SK-N-SH (cell line): ENCODE measurements at regions of chr10 and their contacts with region 1.

Region 1: GRCh38 chr10:126387023-126387921 is 1.0 kb downstream of the ADAM12 start:
- DNase-seq: peak; percentile 80
- H3K4me3 ChIP-seq: peak overlapping the region; percentile 60 to 71
- H3K27ac ChIP-seq: peak overlapping the region; percentile 54 to 76
- H3K4me1 ChIP-seq: peaks cover 0 to 10% of the 10 kb centered on the region in 2 experiments; a peak in 2 of 4 replicates
- H3K27me3 ChIP-seq: no peaks in the 10 kb centered on the region
- CTCF ChIP-seq: peak; percentile 96
- EP300 ChIP-seq: peak in 1 of 2 experiments; percentile 38; a peak in 1 of 4 replicates
- RAD21 ChIP-seq: peak; percentile 88

Region 2: DNA sequence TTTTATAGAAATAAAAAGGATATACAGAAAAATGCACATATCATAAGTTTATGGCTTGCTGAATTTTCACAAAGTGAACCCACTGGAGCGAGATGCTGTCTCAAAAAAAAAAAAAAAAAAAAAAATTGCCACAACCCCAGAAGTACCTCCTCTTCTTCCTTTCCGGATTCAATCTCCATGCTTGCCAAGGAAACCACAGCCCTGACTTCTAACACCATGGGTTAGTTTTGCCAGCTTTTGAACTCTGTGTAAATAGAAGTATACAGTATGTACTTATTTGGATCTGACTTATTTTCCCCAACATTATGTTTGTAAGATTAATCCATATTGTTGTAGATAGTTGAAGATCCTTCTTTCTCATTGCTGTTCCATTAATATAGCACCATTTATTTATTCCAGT is 450.9 kb before region 1 on chr10:
- CTCF ChIA-PET with region 1: interaction called, 14 read pairs
- POLR2A ChIA-PET with region 1: no interaction called
- DNase-seq: no peak
- H3K4me3 ChIP-seq: no peak overlapping the region
- H3K27ac ChIP-seq: no peak overlapping the region
- H3K4me1 ChIP-seq: peaks cover 0 to 7% of the 10 kb centered on the region in 2 experiments; a peak in 1 of 4 replicates
- H3K27me3 ChIP-seq: no peaks in the 10 kb centered on the region
- CTCF ChIP-seq: no peak
- EP300 ChIP-seq: no peak
- RAD21 ChIP-seq: no peak

Region 3: DNA sequence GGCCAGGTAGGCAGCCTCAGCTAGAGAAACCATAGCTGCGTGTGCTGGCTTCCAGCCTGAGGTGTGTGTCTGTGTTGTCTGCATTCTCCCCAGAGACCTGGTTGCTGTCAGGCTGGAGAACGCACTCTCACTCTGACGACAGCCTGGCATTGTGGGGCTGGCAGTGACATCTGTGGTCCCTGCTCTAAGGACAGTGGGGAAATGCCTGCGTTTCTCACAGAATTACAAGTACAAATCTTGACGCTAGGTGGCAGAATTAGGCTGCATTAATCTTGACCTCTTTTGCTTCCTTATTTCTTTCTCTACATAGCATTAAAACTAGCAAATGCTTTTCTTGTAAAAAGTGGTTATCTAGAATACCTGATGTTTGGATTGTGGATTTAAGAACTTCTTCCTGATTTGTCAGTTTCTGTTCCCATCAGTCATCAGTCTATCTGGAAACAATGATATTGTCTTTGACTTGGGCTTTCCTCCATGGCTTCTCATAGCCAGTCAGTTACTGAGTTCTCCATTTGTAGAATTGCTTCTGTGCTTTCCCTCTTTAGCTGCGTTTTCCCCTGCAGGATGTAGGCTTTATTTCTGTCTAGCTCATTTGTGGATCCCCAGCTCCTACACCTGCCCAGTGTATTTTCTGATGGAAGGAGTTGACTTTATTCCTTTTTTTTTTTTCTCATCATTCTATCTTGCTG is 404.9 kb before region 1 on chr10:
- CTCF ChIA-PET with region 1: interaction called, 24 read pairs
- POLR2A ChIA-PET with region 1: no interaction called
- DNase-seq: peak; percentile 78
- H3K4me3 ChIP-seq: no peak overlapping the region
- H3K27ac ChIP-seq: no peak overlapping the region; a peak in 1 of 4 replicates
- H3K4me1 ChIP-seq: peaks cover 0 to 7% of the 10 kb centered on the region in 2 experiments; a peak in 3 of 4 replicates
- H3K27me3 ChIP-seq: no peaks in the 10 kb centered on the region
- CTCF ChIP-seq: peak; percentile 71
- EP300 ChIP-seq: peak in 1 of 2 experiments; percentile 48; a peak in 1 of 4 replicates
- RAD21 ChIP-seq: peak; percentile 90

Region 4: GRCh38 chr10:126242397-126243287 is 144.6 kb before region 1 on chr10:
- CTCF ChIA-PET with region 1: interaction called, 10 read pairs
- POLR2A ChIA-PET with region 1: no interaction called
- DNase-seq: peak; percentile 80
- H3K4me3 ChIP-seq: no peak overlapping the region
- H3K27ac ChIP-seq: peak overlapping the region; percentile 89 to 98
- H3K4me1 ChIP-seq: peaks cover 26 to 30% of the 10 kb centered on the region in 2 experiments
- H3K27me3 ChIP-seq: no peaks in the 10 kb centered on the region
- CTCF ChIP-seq: no peak
- EP300 ChIP-seq: no peak
- RAD21 ChIP-seq: no peak

Region 5: DNA sequence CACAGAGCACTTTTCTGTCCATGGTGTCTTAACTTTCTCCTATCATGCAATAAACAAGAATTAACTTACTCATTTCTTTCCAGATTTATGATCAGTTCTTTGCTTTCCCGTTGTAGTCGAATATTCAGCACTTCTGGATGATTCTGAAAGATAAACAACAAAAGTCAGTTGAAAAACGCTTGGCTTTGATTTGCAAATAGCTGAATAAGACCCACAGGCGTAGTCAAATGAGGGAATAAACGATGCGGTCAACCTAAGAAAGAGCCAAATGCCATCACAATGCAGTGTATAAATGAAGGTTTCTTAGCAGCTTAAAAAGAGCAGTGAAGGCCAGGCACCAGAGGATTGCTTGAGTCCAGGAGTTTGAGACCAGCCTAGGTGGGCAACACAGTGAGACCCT is 108.4 kb before region 1 on chr10:
- CTCF ChIA-PET with region 1: no interaction called
- POLR2A ChIA-PET with region 1: no interaction called
- DNase-seq: no peak
- H3K4me3 ChIP-seq: no peak overlapping the region
- H3K27ac ChIP-seq: no peak overlapping the region
- H3K4me1 ChIP-seq: no peaks in the 10 kb centered on the region; a peak in 2 of 4 replicates
- H3K27me3 ChIP-seq: no peaks in the 10 kb centered on the region
- CTCF ChIP-seq: no peak
- EP300 ChIP-seq: no peak
- RAD21 ChIP-seq: no peak

Region 6: GRCh38 chr10:126369125-126369710 is 18.1 kb before region 1 on chr10:
- CTCF ChIA-PET with region 1: interaction called, 17 read pairs
- POLR2A ChIA-PET with region 1: interaction called, 3 read pairs
- DNase-seq: no peak
- H3K4me3 ChIP-seq: no peak overlapping the region
- H3K27ac ChIP-seq: no peak overlapping the region
- H3K4me1 ChIP-seq: peaks cover 0 to 20% of the 10 kb centered on the region in 2 experiments; a peak in 2 of 4 replicates
- H3K27me3 ChIP-seq: no peaks in the 10 kb centered on the region
- CTCF ChIP-seq: no peak
- EP300 ChIP-seq: no peak
- RAD21 ChIP-seq: no peak

Region 7: GRCh38 chr10:126504063-126504739 is 116.9 kb after region 1 on chr10:
- CTCF ChIA-PET with region 1: interaction called, 33 read pairs
- POLR2A ChIA-PET with region 1: no interaction called
- DNase-seq: peak; percentile 83
- H3K4me3 ChIP-seq: peak overlapping the region in 1 of 2 experiments; percentile 32; a peak in 1 of 4 replicates
- H3K27ac ChIP-seq: no peak overlapping the region
- H3K4me1 ChIP-seq: peaks cover 0 to 3% of the 10 kb centered on the region in 2 experiments; a peak in 1 of 4 replicates
- H3K27me3 ChIP-seq: no peaks in the 10 kb centered on the region
- CTCF ChIP-seq: peak; percentile 75
- EP300 ChIP-seq: no peak
- RAD21 ChIP-seq: peak; percentile 98

Region 8: GRCh38 chr10:126569513-126570244 is 182.4 kb after region 1 on chr10:
- CTCF ChIA-PET with region 1: no interaction called
- POLR2A ChIA-PET with region 1: no interaction called
- DNase-seq: no peak
- H3K4me3 ChIP-seq: no peak overlapping the region; a peak in 1 of 4 replicates
- H3K27ac ChIP-seq: peak overlapping the region in 1 of 2 experiments; percentile 71; a peak in 2 of 4 replicates
- H3K4me1 ChIP-seq: peaks cover 0 to 8% of the 10 kb centered on the region in 2 experiments; a peak in 1 of 4 replicates
- H3K27me3 ChIP-seq: no peaks in the 10 kb centered on the region
- CTCF ChIP-seq: no peak
- EP300 ChIP-seq: no peak; a peak in 1 of 4 replicates
- RAD21 ChIP-seq: no peak

Region 9: GRCh38 chr10:126580873-126581647 is 193.8 kb after region 1 on chr10:
- CTCF ChIA-PET with region 1: no interaction called
- POLR2A ChIA-PET with region 1: no interaction called
- DNase-seq: no peak
- H3K4me3 ChIP-seq: no peak overlapping the region
- H3K27ac ChIP-seq: no peak overlapping the region
- H3K4me1 ChIP-seq: no peaks in the 10 kb centered on the region
- H3K27me3 ChIP-seq: no peaks in the 10 kb centered on the region
- CTCF ChIP-seq: no peak
- EP300 ChIP-seq: no peak
- RAD21 ChIP-seq: no peak